ENCODE measurements at regions of chr13 and their contacts with region 1.

Region 1: DNA sequence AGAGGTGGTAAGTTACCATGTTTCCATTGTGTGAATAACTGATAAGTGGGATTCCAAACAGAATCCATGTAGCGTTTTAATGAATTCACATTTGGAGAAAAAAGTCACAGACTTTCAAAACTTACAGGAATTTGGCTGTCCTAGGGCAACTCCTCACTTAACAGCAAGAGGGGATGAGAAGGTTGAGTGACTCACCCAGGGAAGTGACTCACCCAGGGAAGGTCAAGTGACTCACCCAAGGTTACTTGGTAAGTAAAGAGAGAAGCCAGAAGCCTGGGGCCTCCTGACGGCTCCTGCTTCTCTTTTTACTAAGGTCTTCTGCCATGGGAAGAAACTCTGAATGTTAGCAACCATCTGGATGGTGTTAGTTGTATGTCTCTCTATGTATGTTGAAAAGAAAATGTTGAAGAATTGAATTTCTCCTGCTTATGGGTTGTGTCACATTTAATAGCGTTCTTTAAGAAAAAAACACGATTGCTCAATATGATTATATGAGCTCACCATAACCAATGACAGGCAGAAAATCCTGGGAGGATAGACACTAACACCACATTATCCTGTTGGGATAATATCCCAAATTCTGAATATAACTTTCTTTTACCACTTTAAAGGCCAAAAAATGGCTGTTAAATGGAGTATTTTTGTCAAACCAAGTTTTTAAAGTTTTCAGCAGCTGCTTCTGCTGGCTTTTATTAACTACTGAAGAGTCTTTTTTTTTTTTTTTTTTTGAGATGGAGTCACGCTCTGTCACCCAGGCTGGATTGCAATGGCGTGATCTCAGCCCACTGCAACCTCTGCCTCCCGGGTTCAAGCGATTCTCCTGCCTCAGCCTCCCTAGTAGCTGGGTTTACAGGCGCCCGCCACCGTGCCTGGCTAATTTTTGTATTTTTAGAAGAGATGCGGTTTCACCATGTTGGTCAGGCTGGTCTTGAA is 195.6 kb downstream of the GGACT start:
- DNase-seq: peak; percentile 67
- H3K4me3 Mint-ChIP-seq: no peak overlapping the region
- H3K27ac Mint-ChIP-seq: no peak overlapping the region
- H3K4me1 Mint-ChIP-seq: no peaks in the 10 kb centered on the region
- H3K27me3 Mint-ChIP-seq: no peaks in the 10 kb centered on the region
- CTCF ChIP-seq: no peak

Region 2: GRCh38 chr13:100440751-100441425 is 47.9 kb after region 1 on chr13:
- CTCF ChIA-PET with region 1: no interaction called
- intact Hi-C with region 1: loop called (anchors 10 kb)
- DNase-seq: no peak
- H3K4me3 Mint-ChIP-seq: no peak overlapping the region
- H3K27ac Mint-ChIP-seq: no peak overlapping the region
- H3K4me1 Mint-ChIP-seq: peaks cover 19% of the 10 kb centered on the region
- H3K27me3 Mint-ChIP-seq: no peaks in the 10 kb centered on the region
- CTCF ChIP-seq: no peak

Measured in Calu3 (cell line).